ENCODE measurements at regions of chrX and their contacts with region 1.

Region 1: DNA sequence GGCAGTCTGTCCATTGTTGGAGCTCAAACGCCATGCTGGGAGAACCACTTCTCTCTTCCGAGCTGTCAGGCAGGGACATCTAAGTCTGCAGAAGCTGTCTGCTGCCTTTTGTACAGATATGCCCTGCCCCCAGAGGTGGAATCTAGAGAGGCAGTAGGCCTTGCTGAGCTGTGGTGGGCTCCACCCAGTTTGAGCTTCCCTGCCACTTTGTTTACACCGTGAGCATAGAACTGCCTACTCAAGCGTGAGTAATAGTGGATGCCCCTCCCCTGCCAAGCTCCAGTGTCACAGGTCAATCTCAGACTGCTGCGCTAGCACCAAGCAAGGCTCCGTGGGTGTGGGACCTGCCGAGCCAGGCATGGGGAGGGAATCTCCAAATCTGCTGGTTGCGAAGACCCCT is 145.7 kb downstream of the VSIG4 start:
- DNase-seq: peak; percentile 56
- ATAC-seq: peak; percentile 86
- H3K4me3 ChIP-seq: peak overlapping the region in 2 of 5 experiments; percentile 17 to 19
- H3K4me3 Mint-ChIP-seq: peak overlapping the region; percentile 70
- H3K27ac ChIP-seq: peak overlapping the region in 1 of 2 donors; percentile 40
- H3K27ac Mint-ChIP-seq: peak overlapping the region; percentile 77
- H3K4me1 ChIP-seq: peaks cover 15 to 24% of the 10 kb centered on the region in 2 donors
- H3K4me1 Mint-ChIP-seq: peaks cover 36% of the 10 kb centered on the region
- H3K27me3 ChIP-seq: no peaks in the 10 kb centered on the region
- H3K27me3 Mint-ChIP-seq: no peaks in the 10 kb centered on the region
- CTCF ChIP-seq: no peak

Region 2: DNA sequence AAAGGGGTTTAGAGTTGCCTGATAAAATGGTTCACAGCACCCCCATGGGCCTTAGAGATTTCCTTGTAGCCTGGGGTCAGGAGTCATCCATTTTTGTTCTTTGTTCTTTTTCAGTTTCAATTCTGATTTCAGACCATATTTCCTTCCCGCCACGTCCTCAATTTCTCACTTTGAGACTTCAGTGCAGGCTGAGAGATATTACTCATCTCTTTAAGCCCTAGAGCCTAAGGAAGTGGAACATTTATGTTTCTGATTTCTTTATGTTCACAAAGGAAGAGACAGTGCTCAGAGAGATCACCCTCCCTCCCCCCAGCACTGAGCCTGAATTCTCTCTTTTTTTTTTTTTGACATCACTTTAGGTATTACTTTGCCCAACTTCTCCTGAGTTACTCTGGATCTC is 170.4 kb before region 1 on chrX:
- CTCF ChIA-PET with region 1: no interaction called
- POLR2A ChIA-PET with region 1: no interaction called
- intact Hi-C with region 1: loop called (anchors 10 kb)
- DNase-seq: peak; percentile 33
- ATAC-seq: peak; percentile 50
- H3K4me3 ChIP-seq: no peak overlapping the region
- H3K4me3 Mint-ChIP-seq: peak overlapping the region; percentile 53
- H3K27ac ChIP-seq: peak overlapping the region in 1 of 2 donors; percentile 72
- H3K27ac Mint-ChIP-seq: peak overlapping the region; percentile 86
- H3K4me1 ChIP-seq: peaks cover 51 to 69% of the 10 kb centered on the region in 2 donors
- H3K4me1 Mint-ChIP-seq: peaks cover 82% of the 10 kb centered on the region
- H3K27me3 ChIP-seq: no peaks in the 10 kb centered on the region
- H3K27me3 Mint-ChIP-seq: no peaks in the 10 kb centered on the region
- CTCF ChIP-seq: no peak

Region 3: GRCh38 chrX:65910899-65911298 is 16.8 kb after region 1 on chrX:
- CTCF ChIA-PET with region 1: no interaction called
- POLR2A ChIA-PET with region 1: no interaction called
- intact Hi-C with region 1: no loop called
- DNase-seq: no peak
- ATAC-seq: no peak
- H3K4me3 ChIP-seq: no peak overlapping the region
- H3K4me3 Mint-ChIP-seq: no peak overlapping the region
- H3K27ac ChIP-seq: no peak overlapping the region
- H3K27ac Mint-ChIP-seq: no peak overlapping the region
- H3K4me1 ChIP-seq: no peaks in the 10 kb centered on the region
- H3K4me1 Mint-ChIP-seq: peaks cover 2% of the 10 kb centered on the region
- H3K27me3 ChIP-seq: no peaks in the 10 kb centered on the region
- H3K27me3 Mint-ChIP-seq: no peaks in the 10 kb centered on the region
- CTCF ChIP-seq: no peak

Region 4: GRCh38 chrX:65932176-65933084 is 38.3 kb after region 1 on chrX:
- CTCF ChIA-PET with region 1: no interaction called
- POLR2A ChIA-PET with region 1: no interaction called
- intact Hi-C with region 1: no loop called
- DNase-seq: no peak
- ATAC-seq: no peak
- H3K4me3 ChIP-seq: no peak overlapping the region
- H3K4me3 Mint-ChIP-seq: no peak overlapping the region
- H3K27ac ChIP-seq: no peak overlapping the region
- H3K27ac Mint-ChIP-seq: no peak overlapping the region
- H3K4me1 ChIP-seq: peaks cover under 1% of the 10 kb centered on the region in 2 donors
- H3K4me1 Mint-ChIP-seq: peaks cover 3% of the 10 kb centered on the region
- H3K27me3 ChIP-seq: no peaks in the 10 kb centered on the region
- H3K27me3 Mint-ChIP-seq: no peaks in the 10 kb centered on the region
- CTCF ChIP-seq: no peak

Measured in B cell (primary cell).